ENCODE measurements at regions of chr14 and their contacts with region 1.

Region 1: DNA sequence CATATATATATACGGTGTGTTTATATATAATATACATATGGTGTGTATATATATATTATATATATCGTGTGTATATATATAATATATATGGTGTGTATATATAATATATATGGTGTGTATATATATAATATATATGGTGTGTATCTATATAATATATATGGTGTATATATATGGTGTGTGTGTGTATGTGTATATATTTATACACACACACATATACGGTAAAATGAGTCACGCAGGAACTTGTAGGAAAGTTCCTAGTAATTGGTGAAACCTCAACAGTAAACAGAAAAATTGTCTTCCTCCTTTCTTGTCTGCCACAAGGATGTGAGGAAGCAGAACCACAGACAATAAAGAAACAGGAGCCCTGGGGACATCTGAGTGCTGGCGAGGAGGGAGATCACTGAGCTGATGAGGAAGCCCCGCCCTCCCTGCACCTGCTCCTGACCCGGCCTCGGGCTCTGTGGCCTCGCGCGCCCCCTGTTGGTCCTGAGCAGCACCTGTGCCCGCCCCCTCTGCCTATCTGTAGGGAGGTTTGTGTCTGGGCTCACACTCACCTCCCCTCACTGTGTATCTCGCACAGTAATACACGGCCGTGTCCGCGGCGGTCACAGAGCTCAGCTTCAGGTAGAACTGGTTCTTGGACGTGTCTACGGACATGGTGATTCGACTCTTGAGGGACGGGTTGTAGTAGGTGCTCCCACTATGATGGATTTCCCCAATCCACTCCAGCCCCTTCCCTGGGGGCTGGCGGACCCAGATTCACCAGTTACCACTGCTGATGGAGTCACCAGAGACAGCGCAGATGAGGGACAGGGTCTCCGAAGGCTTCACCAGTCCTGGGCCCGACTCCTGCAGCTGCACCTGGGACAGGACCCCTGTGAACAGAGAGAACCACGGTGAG is 1079.4 kb downstream of the TMEM121 start:
- DNase-seq: peak; percentile 74
- CTCF ChIP-seq: peak; percentile 90

Region 2: GRCh38 chr14:106556665-106557289 is 49.0 kb before region 1 on chr14:
- CTCF ChIA-PET with region 1: interaction called, 32 read pairs
- POLR2A ChIA-PET with region 1: no interaction called
- DNase-seq: peak; percentile 45
- CTCF ChIP-seq: peak; percentile 98

Region 3: DNA sequence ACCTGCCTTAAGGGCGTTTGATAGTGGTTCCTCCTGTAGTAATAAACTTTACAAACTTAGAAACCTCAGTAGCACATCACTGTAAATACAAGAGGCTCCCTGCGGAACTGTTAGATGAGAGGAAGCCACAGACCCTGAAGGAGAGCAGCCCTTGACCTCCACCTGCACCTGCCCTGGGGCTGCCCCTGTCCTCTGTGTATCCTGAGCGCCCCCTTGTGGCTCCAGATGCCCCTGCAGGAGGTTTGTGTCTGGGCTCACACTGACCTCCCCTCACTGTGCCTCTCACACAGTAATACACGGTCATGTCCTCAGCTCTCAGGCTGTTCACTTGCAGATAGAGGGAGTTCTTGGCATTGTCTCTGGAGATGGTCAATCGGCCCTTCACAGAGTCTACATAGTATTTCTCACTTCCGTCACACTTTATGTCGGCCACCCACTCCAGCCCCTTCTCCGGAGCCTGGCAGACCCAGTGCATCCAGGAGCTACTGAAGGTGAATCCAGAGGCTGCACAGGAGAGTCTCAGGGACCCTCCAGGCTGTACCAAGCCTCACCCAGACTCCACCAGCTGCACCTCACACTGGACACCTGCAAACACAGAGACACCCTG is 19.6 kb before region 1 on chr14:
- CTCF ChIA-PET with region 1: interaction called, 90 read pairs
- POLR2A ChIA-PET with region 1: no interaction called
- DNase-seq: peak; percentile 75
- CTCF ChIP-seq: peak; percentile 85

Region 4: GRCh38 chr14:106823552-106823951 is 217.8 kb after region 1 on chr14:
- CTCF ChIA-PET with region 1: no interaction called
- POLR2A ChIA-PET with region 1: no interaction called
- DNase-seq: no peak
- CTCF ChIP-seq: no peak

Measured in GM10248 (cell line).